Stomach (tissue), 19 donors: ENCODE measurements at regions of chr7 and their contacts with region 1.

Region 1: DNA sequence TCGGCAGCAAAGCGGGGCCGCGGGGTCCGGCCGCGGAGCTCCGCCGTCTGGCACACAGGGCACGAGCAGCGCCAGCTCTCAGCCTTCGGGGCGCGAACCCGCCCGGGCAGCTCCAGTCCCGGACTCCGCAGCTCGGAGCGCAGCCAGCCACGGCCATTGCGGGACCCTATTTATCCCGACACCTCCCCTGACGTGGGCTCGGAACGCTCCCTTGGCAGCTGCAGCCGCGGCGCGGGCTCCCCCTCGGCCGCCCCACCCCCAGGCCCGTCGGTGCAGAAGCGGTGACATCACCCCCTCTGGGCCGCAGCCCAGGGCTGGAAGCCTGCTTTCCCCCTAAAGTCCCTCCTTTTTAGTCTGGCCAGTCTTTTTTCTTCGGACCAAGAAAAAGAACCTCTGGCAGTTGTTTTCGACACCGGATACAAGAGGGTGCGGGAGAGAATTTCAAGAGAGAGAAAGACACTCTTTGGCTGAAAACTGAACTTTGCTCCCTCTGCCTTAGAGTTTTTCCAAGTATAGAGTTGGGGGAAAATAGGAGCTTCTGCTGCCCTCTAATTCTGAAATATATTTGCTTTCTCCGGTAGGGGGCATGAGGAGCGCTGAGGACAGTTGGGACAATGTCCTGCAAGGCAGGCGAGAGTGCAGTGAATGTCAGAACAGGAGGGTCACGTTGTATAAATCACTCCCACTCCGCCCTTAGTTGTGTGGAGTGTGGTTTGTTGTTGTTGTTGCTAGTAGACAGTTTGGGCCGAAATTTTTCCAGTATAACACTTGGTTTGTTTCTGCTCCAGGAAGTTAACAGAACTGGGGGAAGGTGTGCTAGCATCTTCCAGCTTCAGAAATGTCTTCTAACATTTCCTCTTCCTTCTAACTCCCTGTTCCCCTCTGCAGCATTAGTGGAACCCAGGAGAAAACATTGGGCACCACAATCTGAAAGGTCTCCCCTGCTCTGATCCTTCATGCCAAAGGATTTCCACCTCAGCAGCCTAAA is at the start of gene SFRP4:
- DNase-seq: peak in 1 of 2 donors; percentile 88
- H3K4me3 ChIP-seq: peak within 1 kb of the TSS; percentile 48 to 53 (median 49)
- H3K27ac ChIP-seq: peak within 1 kb of the TSS in 4 of 5 donors; percentile 33 to 78 (median 54)
- H3K4me1 ChIP-seq: peaks cover 0 to 42% (median 32%) of the 10 kb centered on the region in 4 donors
- H3K27me3 ChIP-seq: peaks cover 0 to 61% (median 21%) of the 10 kb centered on the region in 3 donors
- CTCF ChIP-seq: peak in 4 of 7 experiments; percentile 14 to 36 (median 23)
- EP300 ChIP-seq: no peak
- POLR2A ChIP-seq: no peak
- total RNA-seq, gene SFRP4: 0.29 to 7.9 TPM in 2 of 5 donors, not detected in the others

Region 2: DNA sequence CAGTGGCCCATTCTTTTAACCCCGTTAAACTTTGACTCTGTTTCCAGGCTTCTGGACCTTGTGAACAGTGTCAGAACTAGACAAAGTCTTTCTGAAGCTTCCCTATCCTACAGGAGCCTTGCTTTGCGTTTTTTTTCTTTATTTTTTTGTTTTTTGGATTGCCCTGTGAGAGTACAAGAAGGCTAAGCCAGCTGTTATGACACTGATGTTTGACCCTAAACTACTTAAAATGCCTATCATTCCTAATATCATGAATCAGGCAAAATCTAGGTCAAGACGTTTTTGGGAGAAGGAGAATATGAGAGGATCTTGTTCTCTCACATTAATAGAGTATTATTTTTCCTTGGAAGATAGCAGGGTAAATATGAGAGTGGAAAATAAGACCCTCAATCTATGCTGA is 83.3 kb after region 1 on chr7:
- intact Hi-C with region 1: no loop called
- DNase-seq: no peak
- H3K4me3 ChIP-seq: no peak overlapping the region
- H3K27ac ChIP-seq: peak overlapping the region in 3 of 5 donors; percentile 29 to 66 (median 62)
- H3K4me1 ChIP-seq: peaks cover 0 to 14% (median 0%) of the 10 kb centered on the region in 4 donors
- H3K27me3 ChIP-seq: no peaks in the 10 kb centered on the region
- CTCF ChIP-seq: no peak
- EP300 ChIP-seq: no peak
- POLR2A ChIP-seq: no peak

Region 3: GRCh38 chr7:38020121-38020785 is 103.3 kb after region 1 on chr7:
- intact Hi-C with region 1: no loop called
- DNase-seq: no peak
- H3K4me3 ChIP-seq: no peak overlapping the region
- H3K27ac ChIP-seq: no peak overlapping the region
- H3K4me1 ChIP-seq: no peaks in the 10 kb centered on the region
- H3K27me3 ChIP-seq: no peaks in the 10 kb centered on the region
- CTCF ChIP-seq: no peak
- EP300 ChIP-seq: no peak
- POLR2A ChIP-seq: no peak

Region 4: GRCh38 chr7:38107486-38107893 is 190.5 kb after region 1 on chr7:
- intact Hi-C with region 1: loop called (anchors 10 kb)
- DNase-seq: peak; percentile 69 to 84
- H3K4me3 ChIP-seq: no peak overlapping the region
- H3K27ac ChIP-seq: no peak overlapping the region
- H3K4me1 ChIP-seq: no peaks in the 10 kb centered on the region
- H3K27me3 ChIP-seq: no peaks in the 10 kb centered on the region
- CTCF ChIP-seq: peak in 5 of 7 experiments; percentile 58 to 75 (median 71)
- EP300 ChIP-seq: no peak
- POLR2A ChIP-seq: no peak

Region 5: DNA sequence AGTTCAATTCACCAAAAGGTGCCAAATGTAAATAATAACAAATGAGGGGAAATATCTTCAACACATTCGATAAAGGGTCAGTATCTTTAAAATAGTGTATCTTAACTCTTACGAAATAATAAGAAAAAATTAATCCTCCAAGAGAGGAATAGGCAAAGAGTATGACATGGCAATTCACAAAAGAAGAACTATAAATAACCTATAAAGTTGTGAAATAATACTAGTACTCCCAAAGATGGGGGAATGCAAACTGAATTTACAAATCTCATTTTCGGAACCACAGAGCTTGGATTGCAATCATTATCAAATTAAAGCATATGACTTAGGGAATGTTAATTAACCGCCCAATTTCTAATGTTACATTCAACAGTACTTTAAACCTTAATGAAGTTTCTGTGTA is 434.6 kb after region 1 on chr7:
- intact Hi-C with region 1: no loop called
- DNase-seq: no peak
- H3K4me3 ChIP-seq: no peak overlapping the region
- H3K27ac ChIP-seq: no peak overlapping the region
- H3K4me1 ChIP-seq: no peaks in the 10 kb centered on the region
- H3K27me3 ChIP-seq: no peaks in the 10 kb centered on the region
- CTCF ChIP-seq: no peak
- EP300 ChIP-seq: no peak
- POLR2A ChIP-seq: no peak